ENCODE measurements at regions of chr17 and their contacts with region 1.

Region 1: DNA sequence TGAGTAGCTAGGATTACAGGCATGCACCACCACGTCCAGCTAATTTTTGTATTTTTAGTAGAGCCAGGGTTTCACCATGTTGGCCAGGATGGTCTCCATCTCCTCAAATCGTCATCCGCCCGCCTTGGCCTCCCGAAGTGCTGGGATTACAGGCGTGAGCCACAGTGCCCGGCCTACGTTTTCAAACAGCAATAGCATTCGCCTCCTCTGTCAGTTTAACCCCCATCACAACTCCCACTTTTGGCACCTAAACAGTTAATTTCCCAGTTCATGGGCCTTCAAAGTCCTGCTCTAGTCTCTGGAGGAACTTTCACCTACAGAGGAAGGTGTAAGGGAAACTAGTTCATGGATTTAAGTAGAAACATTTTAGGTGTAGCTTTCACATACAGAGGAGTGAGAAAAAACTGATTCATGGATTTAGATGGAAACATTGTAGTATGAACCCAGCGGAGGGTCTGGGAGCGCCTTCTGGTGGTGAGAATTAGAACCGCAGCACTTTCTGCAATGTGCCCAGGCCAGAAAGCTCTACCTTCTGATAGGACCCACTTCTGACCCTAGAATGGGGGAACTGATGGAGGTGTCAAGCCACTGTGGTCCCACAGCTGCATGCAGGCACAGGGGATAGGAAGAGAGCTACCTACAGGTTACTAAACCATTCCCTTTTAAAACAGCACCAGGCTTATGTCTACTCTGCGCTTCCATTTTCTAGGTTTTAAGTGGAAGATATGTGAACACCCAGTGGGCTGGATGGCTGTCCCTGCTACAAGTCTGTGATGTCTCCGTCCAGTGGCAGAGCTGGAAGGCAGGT is 12.0 kb upstream of the MEOX1 start:
- DNase-seq: peak; percentile 60
- ATAC-seq: peak; percentile 84
- H3K4me3 ChIP-seq: no peak overlapping the region
- H3K27ac ChIP-seq: no peak overlapping the region
- H3K4me1 ChIP-seq: peaks cover 5% of the 10 kb centered on the region
- H3K27me3 ChIP-seq: no peaks in the 10 kb centered on the region; the same call in 1 of the 2 replicates
- CTCF ChIP-seq: peak; percentile 98
- POLR2A ChIP-seq: peak; percentile 50
- RAD21 ChIP-seq: peak; percentile 99

Region 2: GRCh38 chr17:43524945-43525575 is 148.7 kb before region 1 on chr17:
- CTCF ChIA-PET with region 1: interaction called, 7 read pairs
- POLR2A ChIA-PET with region 1: no interaction called
- dilution Hi-C with region 1: no loop called
- in situ Hi-C with region 1: loop called (anchors 5 kb)
- intact Hi-C with region 1: no loop called
- DNase-seq: peak; percentile 27
- ATAC-seq: peak; percentile 47
- H3K4me3 ChIP-seq: no peak overlapping the region
- H3K27ac ChIP-seq: no peak overlapping the region
- H3K4me1 ChIP-seq: peaks cover 10% of the 10 kb centered on the region
- H3K27me3 ChIP-seq: no peaks in the 10 kb centered on the region
- CTCF ChIP-seq: no peak
- POLR2A ChIP-seq: no peak
- RAD21 ChIP-seq: no peak

Region 3: DNA sequence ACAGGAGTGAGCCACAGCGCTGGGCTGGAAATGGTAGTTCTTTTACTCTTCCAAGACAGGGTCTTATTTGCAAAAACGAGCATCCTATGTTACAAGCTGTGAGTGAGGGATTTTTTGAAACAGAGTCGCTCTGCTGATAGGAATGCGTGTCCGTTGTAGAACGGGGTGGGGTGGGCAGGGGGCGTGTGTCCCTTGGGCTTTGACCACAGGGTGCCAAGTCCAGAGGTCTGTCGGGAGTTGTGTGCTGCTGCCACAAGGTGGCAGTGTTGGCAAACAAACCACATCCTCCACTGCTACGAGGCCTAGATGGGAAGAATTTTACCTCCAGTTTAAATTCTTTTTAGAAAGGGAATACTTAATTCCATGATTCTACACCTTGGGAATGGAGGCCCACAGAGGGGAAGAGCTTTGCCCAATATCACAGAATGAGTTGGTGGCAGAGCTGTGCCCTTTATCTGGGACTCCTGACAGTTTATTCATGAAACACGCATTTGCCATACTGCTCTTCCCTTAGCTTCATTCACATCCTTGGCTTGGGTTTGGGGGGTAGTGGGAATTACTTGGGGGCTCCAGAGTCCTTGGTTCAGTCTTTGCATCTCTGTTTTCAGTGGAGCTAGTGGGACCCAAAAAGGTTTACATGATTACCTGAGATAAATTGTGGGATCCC is 97.0 kb before region 1 on chr17:
- CTCF ChIA-PET with region 1: interaction called, 82 read pairs
- POLR2A ChIA-PET with region 1: interaction called, 6 read pairs
- dilution Hi-C with region 1: no loop called
- in situ Hi-C with region 1: loop called (anchors 5 kb)
- intact Hi-C with region 1: loop called (anchors 1 kb)
- DNase-seq: peak; percentile 77
- ATAC-seq: peak; percentile 71
- H3K4me3 ChIP-seq: no peak overlapping the region
- H3K27ac ChIP-seq: no peak overlapping the region
- H3K4me1 ChIP-seq: peaks cover 14% of the 10 kb centered on the region
- H3K27me3 ChIP-seq: no peaks in the 10 kb centered on the region
- CTCF ChIP-seq: peak; percentile 93
- POLR2A ChIP-seq: peak; percentile 56; the same call in 1 of the 2 replicates
- RAD21 ChIP-seq: peak; percentile 99